IMR-90 (cell line): ENCODE measurements at regions of chr22 and their contacts with region 1.

Region 1: GRCh38 chr22:29136782-29137700 is 64.2 kb downstream of the KREMEN1 start:
- DNase-seq: no peak
- ATAC-seq: no peak
- H3K4me3 ChIP-seq: no peak overlapping the region
- H3K27ac ChIP-seq: no peak overlapping the region
- H3K4me1 ChIP-seq: peaks cover 3% of the 10 kb centered on the region; the same call in 1 of the 2 replicates
- H3K27me3 ChIP-seq: no peaks in the 10 kb centered on the region
- CTCF ChIP-seq: no peak
- POLR2A ChIP-seq: no peak
- RAD21 ChIP-seq: no peak

Region 2: DNA sequence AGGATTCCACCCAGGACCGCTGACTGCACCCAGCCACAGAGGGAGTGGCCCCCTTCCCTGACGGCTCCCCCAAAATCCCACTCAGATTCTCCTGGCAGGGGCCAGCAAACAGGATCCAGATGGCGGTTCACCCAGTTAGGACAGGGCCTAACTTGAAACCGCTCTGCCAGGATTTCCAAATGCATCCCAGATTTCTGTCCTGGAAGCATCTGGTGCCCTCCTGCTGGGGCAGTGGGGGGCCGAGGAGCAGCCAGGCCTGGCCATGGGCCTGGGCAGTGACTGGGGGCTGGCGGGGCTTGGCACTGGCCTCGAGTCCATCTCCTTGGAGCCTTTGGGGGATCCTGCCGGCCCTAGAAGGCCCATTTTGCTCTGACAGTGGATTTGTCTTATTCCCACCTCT is 50.8 kb after region 1 on chr22:
- CTCF ChIA-PET with region 1: no interaction called
- POLR2A ChIA-PET with region 1: no interaction called
- dilution Hi-C with region 1: no loop called
- in situ Hi-C with region 1: no loop called
- intact Hi-C with region 1: loop called (anchors 2 kb)
- DNase-seq: no peak
- ATAC-seq: no peak
- H3K4me3 ChIP-seq: no peak overlapping the region
- H3K27ac ChIP-seq: no peak overlapping the region
- H3K4me1 ChIP-seq: no peaks in the 10 kb centered on the region
- H3K27me3 ChIP-seq: peaks cover 9% of the 10 kb centered on the region; the same call in 1 of the 2 replicates
- CTCF ChIP-seq: no peak
- POLR2A ChIP-seq: no peak
- RAD21 ChIP-seq: no peak